HCT116 (cell line): ENCODE measurements at regions of chr15 and their contacts with region 1.

Region 1: DNA sequence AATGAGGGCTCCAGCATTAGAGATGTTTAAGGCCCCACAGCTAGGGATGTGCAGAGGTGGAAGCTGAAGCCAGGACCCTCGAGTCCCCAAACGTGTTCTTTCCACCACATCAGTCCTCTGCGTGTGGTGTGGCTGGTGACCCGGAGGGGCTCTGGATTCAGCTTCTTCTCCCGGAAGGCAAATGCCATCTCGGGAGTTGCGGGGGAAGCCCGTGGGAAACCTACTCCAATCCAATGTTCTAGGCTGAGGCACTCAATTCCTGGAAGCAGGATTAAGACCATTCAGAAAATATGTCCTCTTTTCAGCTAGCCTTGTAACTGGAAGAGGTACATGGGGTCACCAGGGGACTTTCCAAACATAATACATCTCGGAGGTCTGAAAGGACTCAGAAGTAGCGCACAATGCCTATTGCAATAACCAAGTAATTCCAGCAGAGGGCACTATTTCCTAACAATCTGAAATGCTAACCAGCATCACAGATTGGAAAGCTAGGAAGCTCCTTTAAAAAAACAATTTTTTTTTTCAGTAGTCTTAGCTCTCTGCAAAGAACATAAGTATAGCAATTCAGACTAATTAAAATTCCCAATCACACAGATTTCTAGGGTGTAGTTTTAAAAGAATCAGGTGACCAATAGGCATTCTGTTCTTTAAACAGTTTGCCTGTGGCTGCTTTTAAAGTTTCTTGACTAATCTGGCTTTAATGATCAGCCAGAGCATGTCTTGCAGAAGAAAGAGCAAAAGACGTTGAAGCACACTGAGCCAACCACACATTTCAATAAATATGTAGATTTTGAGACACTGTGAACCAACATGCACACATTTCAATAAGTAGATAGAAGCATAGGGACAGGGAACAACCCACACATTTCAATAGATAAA is 36.1 kb downstream of the BNC1 start:
- DNase-seq: peak; percentile 67
- ATAC-seq: peak; percentile 91
- H3K4me3 ChIP-seq: no peak overlapping the region
- H3K27ac ChIP-seq: no peak overlapping the region
- H3K4me1 ChIP-seq: no peaks in the 10 kb centered on the region
- H3K27me3 ChIP-seq: no peaks in the 10 kb centered on the region
- CTCF ChIP-seq: peak; percentile 74 to 92 (median 87)
- POLR2A ChIP-seq: no peak
- RAD21 ChIP-seq: peak; percentile 94

Region 2: DNA sequence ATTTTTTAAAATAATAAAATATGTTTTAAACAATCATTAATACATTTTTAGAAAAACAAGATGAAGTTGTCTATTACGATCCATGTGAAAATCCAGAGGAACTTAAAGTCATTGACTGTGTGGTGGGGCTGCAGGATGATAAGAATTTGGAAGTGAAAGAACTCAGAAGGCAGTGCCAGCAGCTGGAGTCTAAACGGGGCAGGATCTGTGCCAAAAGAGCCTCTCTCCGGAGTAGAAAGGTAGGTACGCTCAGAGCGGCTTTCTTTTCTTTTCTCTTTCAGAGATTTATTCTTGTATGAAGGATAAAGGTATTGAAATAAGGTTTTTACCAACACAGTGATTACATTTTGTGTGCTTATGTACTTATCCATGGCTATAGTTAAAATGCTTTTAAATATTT is 425.3 kb before region 1 on chr15:
- CTCF ChIA-PET with region 1: no interaction called
- POLR2A ChIA-PET with region 1: no interaction called
- RAD21 ChIA-PET with region 1: no interaction called
- intact Hi-C with region 1: no loop called
- DNase-seq: no peak
- ATAC-seq: no peak
- H3K4me3 ChIP-seq: no peak overlapping the region
- H3K27ac ChIP-seq: no peak overlapping the region
- H3K4me1 ChIP-seq: peaks cover 0 to 7% of the 10 kb centered on the region in 2 experiments; a peak in 2 of 4 replicates
- H3K27me3 ChIP-seq: no peaks in the 10 kb centered on the region
- CTCF ChIP-seq: no peak
- POLR2A ChIP-seq: no peak
- RAD21 ChIP-seq: no peak

Region 3: GRCh38 chr15:82849556-82850512 is 398.6 kb before region 1 on chr15:
- CTCF ChIA-PET with region 1: no interaction called
- POLR2A ChIA-PET with region 1: no interaction called
- RAD21 ChIA-PET with region 1: no interaction called
- intact Hi-C with region 1: no loop called
- DNase-seq: peak; percentile 84
- ATAC-seq: peak; percentile 98
- H3K4me3 ChIP-seq: peak overlapping the region in 1 of 2 experiments; percentile 22; a peak in 1 of 4 replicates
- H3K27ac ChIP-seq: peak overlapping the region; percentile 7; the same call in 1 of the 2 replicates
- H3K4me1 ChIP-seq: peaks cover 3 to 19% of the 10 kb centered on the region in 2 experiments; a peak in 3 of 4 replicates
- H3K27me3 ChIP-seq: no peaks in the 10 kb centered on the region
- CTCF ChIP-seq: peak; percentile 66 to 89 (median 88)
- POLR2A ChIP-seq: no peak
- RAD21 ChIP-seq: peak; percentile 87

Region 4: DNA sequence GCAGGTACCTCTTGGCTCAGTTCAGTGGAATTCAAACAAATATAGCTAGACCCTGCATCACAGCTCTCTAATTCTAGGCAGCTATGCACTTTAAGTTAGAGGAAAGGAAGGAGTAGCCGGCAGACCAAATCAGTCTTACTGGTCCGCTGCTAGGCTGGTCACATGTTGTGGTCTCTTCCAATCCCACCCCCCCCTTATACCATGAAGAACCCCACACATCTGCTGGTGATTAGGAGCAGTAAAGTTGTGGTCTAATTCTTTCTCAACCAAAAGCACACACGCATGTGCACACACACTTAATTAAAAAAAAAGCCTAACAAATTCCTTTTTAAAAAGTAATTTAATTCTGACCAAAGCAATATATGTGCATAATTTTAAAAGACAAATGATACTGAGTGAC is 182.1 kb after region 1 on chr15:
- CTCF ChIA-PET with region 1: interaction called, 125 read pairs
- POLR2A ChIA-PET with region 1: no interaction called
- RAD21 ChIA-PET with region 1: interaction called, 16 to 29 read pairs
- intact Hi-C with region 1: no loop called
- DNase-seq: no peak
- ATAC-seq: no peak
- H3K4me3 ChIP-seq: no peak overlapping the region
- H3K27ac ChIP-seq: no peak overlapping the region
- H3K4me1 ChIP-seq: no peaks in the 10 kb centered on the region
- H3K27me3 ChIP-seq: no peaks in the 10 kb centered on the region
- CTCF ChIP-seq: no peak
- POLR2A ChIP-seq: no peak
- RAD21 ChIP-seq: no peak

Region 5: DNA sequence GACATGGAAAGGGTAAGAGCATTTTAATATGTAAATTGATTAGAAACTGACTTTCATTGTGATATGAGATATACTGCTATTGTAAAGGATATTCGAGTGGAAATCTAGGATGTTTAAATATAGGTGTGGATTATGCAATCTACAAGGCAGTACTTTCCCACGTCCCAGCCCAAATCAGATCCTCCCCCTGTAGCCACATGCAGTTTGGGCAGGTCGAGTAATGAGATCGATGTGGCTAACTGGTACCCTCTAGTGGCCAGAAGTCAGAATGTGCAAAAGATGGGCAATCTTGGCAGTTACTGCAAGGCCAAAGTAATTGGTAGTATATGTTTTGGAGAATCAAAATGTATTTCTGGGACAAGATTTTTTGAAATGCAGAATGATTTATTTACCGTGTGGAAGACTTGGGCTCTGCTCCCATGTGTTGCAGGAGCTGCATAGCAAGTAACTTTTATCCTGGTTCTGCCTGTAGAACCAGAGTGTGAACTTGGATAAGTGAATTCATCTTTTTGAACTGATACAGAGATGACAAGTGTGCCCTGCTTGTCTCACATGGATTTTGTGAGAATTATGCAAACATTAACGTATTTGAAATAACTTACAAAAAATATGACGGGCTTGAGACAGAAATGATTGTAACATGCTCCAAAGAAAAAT is 311.0 kb after region 1 on chr15:
- CTCF ChIA-PET with region 1: interaction called, 19 read pairs
- POLR2A ChIA-PET with region 1: no interaction called
- RAD21 ChIA-PET with region 1: interaction called in 1 of 2 experiments, 3 read pairs
- intact Hi-C with region 1: loop called (anchors 1 kb)
- DNase-seq: peak; percentile 60
- ATAC-seq: peak; percentile 97
- H3K4me3 ChIP-seq: no peak overlapping the region
- H3K27ac ChIP-seq: no peak overlapping the region
- H3K4me1 ChIP-seq: no peaks in the 10 kb centered on the region
- H3K27me3 ChIP-seq: no peaks in the 10 kb centered on the region
- CTCF ChIP-seq: peak; percentile 75 to 89 (median 82)
- POLR2A ChIP-seq: no peak
- RAD21 ChIP-seq: peak; percentile 85

Region 6: GRCh38 chr15:83720468-83720867 is 472.1 kb after region 1 on chr15:
- CTCF ChIA-PET with region 1: no interaction called
- POLR2A ChIA-PET with region 1: no interaction called
- RAD21 ChIA-PET with region 1: no interaction called
- intact Hi-C with region 1: loop called (anchors 10 kb)
- DNase-seq: no peak
- ATAC-seq: no peak
- H3K4me3 ChIP-seq: no peak overlapping the region
- H3K27ac ChIP-seq: no peak overlapping the region
- H3K4me1 ChIP-seq: no peaks in the 10 kb centered on the region
- H3K27me3 ChIP-seq: peaks cover 20% of the 10 kb centered on the region
- CTCF ChIP-seq: no peak
- POLR2A ChIP-seq: no peak
- RAD21 ChIP-seq: no peak